ENCODE measurements at regions of chr1 and their contacts with region 1.

Region 1: GRCh38 chr1:244451951-244452795 is 464 bp upstream of the ADSS2 start:
- DNase-seq: peak; percentile 96 to 99
- H3K4me3 ChIP-seq: peak overlapping the region; percentile 85
- H3K27ac ChIP-seq: 0 out of 2 replicates have a peak overlapping the region, but pooled peaks have one; percentile 16
- H3K4me1 ChIP-seq: peaks cover 48% of the 10 kb centered on the region
- H3K27me3 ChIP-seq: no peaks in the 10 kb centered on the region
- CTCF ChIP-seq: peak; percentile 47; the same call in 1 of the 2 replicates

Region 2: DNA sequence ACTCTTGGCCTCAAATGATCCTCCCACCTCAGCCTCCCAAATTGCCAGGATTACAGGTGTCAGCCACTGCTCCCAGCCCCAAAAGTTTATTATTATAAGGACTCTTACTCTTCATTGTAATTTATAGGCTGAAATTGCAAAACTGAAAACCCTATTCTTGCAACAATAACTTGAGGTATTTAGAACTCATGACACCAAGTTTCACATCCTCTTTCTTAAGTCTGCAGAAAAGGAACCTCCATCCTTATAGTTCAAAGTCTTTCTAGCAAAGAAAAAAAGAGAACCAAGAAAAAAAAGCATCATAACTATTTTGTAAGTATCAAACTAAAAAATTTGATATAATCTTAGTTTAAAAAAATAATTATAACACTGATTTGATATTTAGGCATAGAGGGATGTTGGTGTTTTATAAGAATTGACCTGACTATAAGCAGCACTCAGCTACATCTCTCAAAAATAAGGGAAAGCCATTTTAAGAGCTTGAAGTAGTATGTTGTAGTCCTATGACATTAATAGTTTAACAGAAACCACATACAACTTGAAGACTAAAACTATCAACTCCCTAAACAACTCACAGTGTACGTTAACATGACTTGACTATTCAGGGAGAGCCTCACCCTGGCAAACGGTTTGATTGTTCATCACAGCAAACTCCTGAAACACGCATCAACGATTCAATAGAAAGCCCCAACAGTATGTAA is 724.5 kb before region 1 on chr1:
- CTCF ChIA-PET with region 1: no interaction called
- POLR2A ChIA-PET with region 1: no interaction called
- intact Hi-C with region 1: no loop called
- DNase-seq: no peak
- H3K4me3 ChIP-seq: no peak overlapping the region
- H3K27ac ChIP-seq: no peak overlapping the region
- H3K4me1 ChIP-seq: no peaks in the 10 kb centered on the region
- H3K27me3 ChIP-seq: no peaks in the 10 kb centered on the region
- CTCF ChIP-seq: no peak

Region 3: DNA sequence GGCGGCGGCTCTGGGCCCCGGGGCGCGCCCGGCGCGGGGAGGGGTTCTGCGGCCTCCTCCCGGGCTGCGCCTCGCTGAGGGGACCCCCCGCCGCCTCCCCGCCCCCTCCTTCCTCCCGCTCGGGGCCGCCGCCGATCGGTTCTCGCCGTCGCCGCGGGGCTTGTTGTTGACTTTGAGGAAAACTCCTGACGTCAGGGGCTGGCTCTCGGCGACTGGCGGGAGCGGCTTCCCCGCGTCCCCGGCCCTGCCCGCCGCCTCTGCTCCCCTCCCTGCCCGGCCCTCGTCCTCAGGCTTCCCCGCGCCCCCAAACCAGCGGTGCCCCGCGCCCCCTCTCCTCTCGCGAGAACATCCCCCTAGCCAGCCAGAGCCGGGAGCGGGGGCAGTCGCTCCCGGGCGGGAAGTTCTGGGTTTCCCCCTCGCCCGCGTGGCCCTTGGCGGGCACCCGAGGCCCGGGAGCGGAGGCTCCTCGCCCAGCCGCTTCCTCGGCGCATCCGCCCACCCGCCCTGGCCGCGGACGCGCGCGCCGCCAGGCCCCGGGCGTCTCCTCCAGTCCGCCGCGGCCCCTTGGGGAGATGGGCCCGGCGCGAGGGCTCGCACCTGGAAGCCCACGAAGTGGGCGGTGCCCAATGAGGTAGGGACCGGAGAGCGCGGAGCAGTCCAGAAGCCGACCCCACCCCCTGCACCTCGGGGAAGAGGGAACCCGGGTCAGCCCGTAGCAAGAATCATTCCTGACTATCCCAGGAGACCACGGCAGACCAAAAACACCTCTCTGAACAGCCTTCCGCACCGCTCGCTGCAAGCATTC is 601.5 kb before region 1 on chr1:
- CTCF ChIA-PET with region 1: no interaction called
- POLR2A ChIA-PET with region 1: no interaction called
- intact Hi-C with region 1: loop called (anchors 10 kb)
- DNase-seq: peak; percentile 70 to 92
- H3K4me3 ChIP-seq: peak overlapping the region; percentile 69
- H3K27ac ChIP-seq: peak overlapping the region; percentile 85
- H3K4me1 ChIP-seq: peaks cover 49% of the 10 kb centered on the region
- H3K27me3 ChIP-seq: no peaks in the 10 kb centered on the region
- CTCF ChIP-seq: no peak

Region 4: DNA sequence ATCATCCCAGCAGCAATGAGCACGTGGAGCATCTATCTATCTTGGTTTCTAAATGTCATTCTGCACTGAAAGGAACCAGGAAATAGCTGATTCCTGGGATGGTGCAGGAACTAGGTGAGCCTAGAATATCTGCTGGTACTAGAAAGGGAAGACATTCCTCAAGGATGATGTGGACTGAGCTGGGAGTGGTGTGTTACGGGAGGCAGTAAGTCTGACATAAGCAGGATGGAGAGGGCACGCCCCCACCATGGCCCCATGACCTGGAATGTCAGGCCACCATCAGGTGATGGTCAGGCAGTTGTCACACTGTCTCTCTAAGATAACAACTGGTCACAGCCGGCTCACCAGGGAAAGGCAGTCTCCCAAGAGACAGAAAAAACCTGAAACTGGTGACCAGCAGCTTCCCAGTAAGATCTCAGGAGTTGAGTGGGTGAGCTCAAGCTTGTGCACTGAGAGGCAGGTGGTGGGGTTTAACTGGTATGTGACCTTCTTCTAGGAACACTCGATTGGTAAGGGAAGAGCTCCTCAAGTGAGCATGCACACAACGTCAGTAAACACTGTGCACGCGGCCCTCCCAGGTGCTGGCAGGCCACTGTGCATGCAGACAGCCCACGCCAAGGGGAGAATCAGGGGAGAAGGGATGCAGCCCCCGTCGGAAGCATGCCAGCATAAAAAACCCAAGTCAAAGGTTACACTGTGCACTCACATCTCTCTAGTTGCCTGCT is 149.1 kb before region 1 on chr1:
- CTCF ChIA-PET with region 1: no interaction called
- POLR2A ChIA-PET with region 1: no interaction called
- intact Hi-C with region 1: loop called (anchors 2 kb)
- DNase-seq: peak; percentile 84 to 92
- H3K4me3 ChIP-seq: no peak overlapping the region
- H3K27ac ChIP-seq: peak overlapping the region; percentile 69
- H3K4me1 ChIP-seq: peaks cover 39% of the 10 kb centered on the region
- H3K27me3 ChIP-seq: no peaks in the 10 kb centered on the region
- CTCF ChIP-seq: no peak

Region 5: DNA sequence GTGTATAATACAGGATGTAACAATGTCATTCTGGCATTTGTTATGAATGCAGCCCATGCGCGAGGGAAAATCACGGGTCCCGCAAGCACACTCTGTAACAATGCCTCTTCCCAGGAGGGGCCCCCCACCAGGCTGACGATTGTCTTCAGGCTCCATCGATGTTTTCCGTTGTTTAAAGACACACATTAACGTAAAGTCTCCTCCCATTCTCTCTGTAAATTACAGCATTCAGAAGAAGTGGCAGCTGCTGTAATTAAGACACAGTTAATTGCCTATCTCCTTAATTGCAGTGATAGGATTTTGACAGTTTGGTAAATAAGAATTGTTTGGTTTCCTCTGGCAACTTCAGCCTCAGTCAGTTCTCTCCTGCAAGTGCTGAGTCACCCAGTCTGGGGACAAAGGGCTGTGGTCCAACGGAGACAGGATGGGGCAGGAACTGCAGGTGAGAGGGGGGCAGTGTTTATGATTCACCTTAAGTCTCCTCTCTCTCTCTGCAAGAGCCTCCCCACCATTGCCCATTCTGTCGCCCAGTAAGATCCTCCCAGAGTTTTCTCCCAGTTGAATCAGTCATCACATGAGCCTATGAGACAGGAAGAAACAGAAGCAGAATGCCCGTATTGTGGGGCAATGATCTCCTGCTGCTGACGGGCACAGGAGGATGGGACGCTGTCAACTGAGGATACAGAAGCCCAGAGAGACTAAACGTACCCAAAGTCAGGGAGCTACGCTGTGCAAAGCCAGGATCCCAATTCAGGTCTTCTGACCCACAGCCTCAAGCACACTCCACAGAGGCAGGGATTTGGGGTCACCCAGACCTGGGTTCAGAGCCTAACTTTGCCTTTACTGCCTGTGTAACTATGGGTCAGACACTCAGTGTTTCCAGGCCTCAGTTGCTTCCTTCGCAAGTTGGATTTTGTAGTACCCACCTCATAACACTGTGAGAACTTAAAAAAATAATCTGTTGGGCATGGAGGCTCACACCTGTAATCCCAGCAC is 110.4 kb before region 1 on chr1:
- CTCF ChIA-PET with region 1: no interaction called
- POLR2A ChIA-PET with region 1: no interaction called
- intact Hi-C with region 1: loop called (anchors 5 kb)
- DNase-seq: peak in 1 of 2 experiments; percentile 64
- H3K4me3 ChIP-seq: no peak overlapping the region
- H3K27ac ChIP-seq: peak overlapping the region; percentile 38; the same call in 1 of the 2 replicates
- H3K4me1 ChIP-seq: peaks cover 13% of the 10 kb centered on the region
- H3K27me3 ChIP-seq: no peaks in the 10 kb centered on the region
- CTCF ChIP-seq: no peak

Region 6: DNA sequence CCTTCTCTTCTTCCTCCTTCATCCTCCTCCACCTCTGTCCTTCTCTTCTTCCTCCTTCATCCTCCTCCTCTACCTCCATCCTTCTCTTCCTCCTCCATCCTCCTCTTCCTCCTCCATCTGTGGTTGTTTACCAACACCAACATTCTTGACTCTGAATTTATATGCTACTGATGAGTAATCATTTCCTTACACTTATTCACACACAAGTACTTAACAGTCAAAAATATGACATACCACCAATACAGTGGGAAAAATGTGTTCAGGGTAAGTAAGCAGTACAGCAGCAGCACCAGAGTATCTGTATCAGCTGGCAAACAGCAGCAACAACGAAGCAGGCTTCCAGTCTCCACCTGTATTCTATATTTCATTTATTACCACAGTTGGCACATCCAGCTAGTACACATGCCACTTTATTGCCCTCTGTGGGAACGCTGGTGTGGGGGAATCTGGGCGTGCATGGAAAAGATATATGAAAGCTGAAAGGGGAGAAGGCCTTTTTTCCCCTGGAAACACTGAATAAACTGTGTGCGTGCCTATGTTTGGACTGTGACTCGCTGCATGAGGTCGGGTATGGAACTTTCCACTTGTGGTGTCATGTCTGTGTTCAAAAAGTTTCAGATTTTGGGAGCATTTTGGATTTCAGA is 16.5 kb before region 1 on chr1:
- CTCF ChIA-PET with region 1: no interaction called
- POLR2A ChIA-PET with region 1: no interaction called
- intact Hi-C with region 1: no loop called
- DNase-seq: no peak
- H3K4me3 ChIP-seq: no peak overlapping the region
- H3K27ac ChIP-seq: peak overlapping the region; percentile 31; the same call in 1 of the 2 replicates
- H3K4me1 ChIP-seq: peaks cover 30% of the 10 kb centered on the region
- H3K27me3 ChIP-seq: no peaks in the 10 kb centered on the region
- CTCF ChIP-seq: no peak

Region 7: DNA sequence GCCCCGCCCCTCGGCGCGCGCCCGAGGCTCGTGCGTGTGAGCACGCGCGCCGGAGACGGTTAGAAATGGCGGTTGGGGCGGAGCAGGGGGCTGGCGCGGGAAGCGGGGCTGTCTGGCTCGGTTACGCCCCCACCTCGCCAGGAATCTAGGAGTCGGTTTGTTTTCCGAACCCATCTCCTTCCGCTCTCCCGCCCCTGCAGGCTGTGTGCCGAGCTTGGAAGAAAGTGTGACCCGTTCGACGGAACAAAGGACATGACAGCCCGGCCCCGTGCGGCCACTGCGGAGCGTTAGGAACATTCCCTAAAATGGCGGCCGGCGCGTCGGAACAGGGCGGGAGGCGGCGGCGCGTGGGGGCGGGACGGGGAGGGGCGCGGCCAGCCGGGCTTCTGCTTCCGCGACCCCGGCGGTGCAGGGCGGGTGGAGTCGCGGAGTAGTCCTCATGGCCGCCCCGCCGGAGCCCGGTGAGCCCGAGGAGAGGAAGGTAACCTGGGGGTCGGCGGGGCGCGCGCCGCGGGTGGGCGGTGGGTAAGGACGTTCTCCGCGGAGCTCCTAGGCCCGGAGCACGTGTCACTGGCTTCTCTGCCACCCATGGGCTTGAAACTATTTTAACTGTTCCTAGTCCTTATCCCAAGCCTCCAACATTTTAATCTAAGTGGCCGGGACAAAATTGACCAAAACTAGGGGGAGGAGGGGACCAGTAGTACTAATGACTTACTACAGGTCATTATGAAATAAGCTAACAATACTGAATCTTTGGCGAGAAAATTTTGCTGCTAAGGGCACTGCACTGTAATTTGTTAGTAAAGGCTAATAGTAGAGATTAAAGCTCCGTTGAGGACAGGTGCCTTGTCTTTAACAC is 383.3 kb after region 1 on chr1 and contains the start of gene COX20:
- CTCF ChIA-PET with region 1: no interaction called
- POLR2A ChIA-PET with region 1: no interaction called
- intact Hi-C with region 1: loop called (anchors 5 kb)
- DNase-seq: peak in 1 of 2 experiments; percentile 75
- H3K4me3 ChIP-seq: peak within 1 kb of the TSS; percentile 79
- H3K27ac ChIP-seq: peak within 1 kb of the TSS; percentile 98
- H3K4me1 ChIP-seq: peaks cover 22% of the 10 kb centered on the region
- H3K27me3 ChIP-seq: no peaks in the 10 kb centered on the region
- CTCF ChIP-seq: no peak
- total RNA-seq, gene COX20: 34.5 and 40.7 TPM in 2 replicates

Measured in PC-9 (cell line).